Activated T-helper 2 cell treated with anti-CD3 and anti-CD28 coated beads, Interferon-gamma antibody, Interleukin-2, Interleukin-4, amounts not matched to agents 10 μg/mL and 5 μg/mL and 100 μg/mL, durations not matched to agents 14 hours and 24 hours and 36 hours (primary cell): ENCODE measurements at regions of chr7 and their contacts with region 1.

Region 1: GRCh38 chr7:120987683-120988590 is 574 bp upstream of the CPED1 start:
- DNase-seq: peak; percentile 81
- H3K4me3 Mint-ChIP-seq: peak overlapping the region; percentile 78
- H3K27ac Mint-ChIP-seq: no peak overlapping the region
- H3K4me1 Mint-ChIP-seq: peaks cover 21% of the 10 kb centered on the region
- H3K27me3 Mint-ChIP-seq: peaks cover 41% of the 10 kb centered on the region

Region 2: GRCh38 chr7:120857588-120858573 is 130.1 kb before region 1 on chr7 and contains the start of gene TSPAN12:
- intact Hi-C with region 1: loop called (anchors 5 kb)
- DNase-seq: peak; percentile 40
- H3K4me3 Mint-ChIP-seq: peak within 1 kb of the TSS; percentile 83
- H3K27ac Mint-ChIP-seq: no peak within 1 kb of the TSS
- H3K4me1 Mint-ChIP-seq: peaks cover 10% of the 10 kb centered on the region
- H3K27me3 Mint-ChIP-seq: peaks cover 64% of the 10 kb centered on the region
- total RNA-seq, gene TSPAN12: not detected in 2 replicates

Region 3: DNA sequence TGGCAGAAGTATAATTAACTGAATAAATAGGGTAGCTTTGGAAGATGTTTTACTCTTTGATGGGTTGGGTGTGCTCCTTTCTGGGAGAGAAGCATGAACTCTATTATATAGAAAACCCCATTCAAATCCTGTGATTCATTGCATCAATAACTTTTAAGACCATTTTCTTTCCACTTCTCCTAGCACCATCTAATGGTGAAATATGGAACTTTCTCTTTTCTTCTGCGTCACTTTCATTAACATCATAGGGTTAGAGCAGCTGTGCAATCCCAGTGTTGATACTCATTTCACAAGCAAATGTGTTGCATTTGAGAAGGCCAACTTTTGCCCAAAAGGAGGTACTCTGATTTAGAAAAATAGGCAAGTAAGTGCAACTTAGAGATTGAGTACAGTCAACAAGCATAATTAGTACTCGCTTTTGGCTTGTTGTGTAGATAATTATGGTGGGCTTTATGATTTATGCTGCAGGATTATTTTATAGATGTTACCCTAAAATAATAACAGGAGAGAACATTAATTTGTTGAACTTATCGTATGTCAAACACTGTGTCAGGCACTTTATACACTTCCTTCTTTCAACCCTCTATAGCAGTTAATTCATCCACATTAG is 93.5 kb after region 1 on chr7:
- intact Hi-C with region 1: loop called (anchors 1 kb)
- DNase-seq: no peak
- H3K4me3 Mint-ChIP-seq: no peak overlapping the region
- H3K27ac Mint-ChIP-seq: no peak overlapping the region
- H3K4me1 Mint-ChIP-seq: peaks cover 3% of the 10 kb centered on the region
- H3K27me3 Mint-ChIP-seq: peaks cover 28% of the 10 kb centered on the region

Region 4: DNA sequence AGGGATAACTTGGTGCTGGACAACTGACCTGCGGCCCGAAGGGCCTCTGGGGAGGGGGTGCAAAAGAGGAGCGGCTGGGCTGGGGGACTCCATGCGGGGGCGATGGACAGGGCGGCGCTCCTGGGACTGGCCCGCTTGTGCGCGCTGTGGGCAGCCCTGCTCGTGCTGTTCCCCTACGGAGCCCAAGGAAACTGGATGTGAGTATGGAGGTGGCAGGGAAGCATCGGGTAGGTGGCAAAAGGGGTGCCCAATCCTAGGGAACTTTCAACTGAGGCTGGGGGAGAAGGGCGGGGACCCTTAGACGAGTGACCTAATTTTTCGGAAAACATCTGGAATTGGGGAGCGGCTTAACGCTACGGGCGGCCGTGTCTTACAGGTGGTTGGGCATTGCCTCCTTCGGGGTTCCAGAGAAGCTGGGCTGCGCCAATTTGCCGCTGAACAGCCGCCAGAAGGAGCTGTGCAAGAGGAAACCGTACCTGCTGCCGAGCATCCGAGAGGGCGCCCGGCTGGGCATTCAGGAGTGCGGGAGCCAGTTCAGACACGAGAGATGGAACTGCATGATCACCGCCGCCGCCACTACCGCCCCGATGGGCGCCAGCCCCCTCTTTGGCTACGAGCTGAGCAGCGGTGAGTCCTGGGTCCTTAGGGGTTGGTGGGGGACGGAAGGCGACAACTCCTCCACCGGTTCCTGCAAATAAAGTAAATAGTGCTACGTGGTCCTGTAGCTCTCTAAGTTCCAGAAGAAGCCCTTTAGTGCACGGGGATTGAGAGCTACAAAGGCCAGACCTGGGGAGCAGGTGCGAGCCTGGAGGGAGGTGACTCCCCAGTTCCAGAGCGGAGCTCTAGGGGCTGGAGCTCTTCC is 341.5 kb after region 1 on chr7:
- intact Hi-C with region 1: loop called (anchors 10 kb)
- DNase-seq: no peak
- H3K4me3 Mint-ChIP-seq: peak overlapping the region; percentile 38
- H3K27ac Mint-ChIP-seq: no peak overlapping the region
- H3K4me1 Mint-ChIP-seq: peaks cover 11% of the 10 kb centered on the region
- H3K27me3 Mint-ChIP-seq: peaks cover 64% of the 10 kb centered on the region